Activated T-helper 2 cell treated with anti-CD3 and anti-CD28 coated beads, Interferon-gamma antibody, Interleukin-2, Interleukin-4, amounts not matched to agents 10 μg/mL and 5 μg/mL and 100 μg/mL, durations not matched to agents 14 hours and 24 hours and 36 hours (primary cell): ENCODE measurements at regions of chr2 and their contacts with region 1.

Region 1: GRCh38 chr2:170928824-170929685 is at the start of gene GORASP2:
- DNase-seq: peak; percentile 98
- H3K4me3 Mint-ChIP-seq: peak within 1 kb of the TSS; percentile 92
- H3K27ac Mint-ChIP-seq: peak within 1 kb of the TSS; percentile 94
- H3K4me1 Mint-ChIP-seq: peaks cover 45% of the 10 kb centered on the region
- H3K27me3 Mint-ChIP-seq: no peaks in the 10 kb centered on the region
- total RNA-seq, gene GORASP2: 92.4 and 92.8 TPM in 2 replicates

Region 2: DNA sequence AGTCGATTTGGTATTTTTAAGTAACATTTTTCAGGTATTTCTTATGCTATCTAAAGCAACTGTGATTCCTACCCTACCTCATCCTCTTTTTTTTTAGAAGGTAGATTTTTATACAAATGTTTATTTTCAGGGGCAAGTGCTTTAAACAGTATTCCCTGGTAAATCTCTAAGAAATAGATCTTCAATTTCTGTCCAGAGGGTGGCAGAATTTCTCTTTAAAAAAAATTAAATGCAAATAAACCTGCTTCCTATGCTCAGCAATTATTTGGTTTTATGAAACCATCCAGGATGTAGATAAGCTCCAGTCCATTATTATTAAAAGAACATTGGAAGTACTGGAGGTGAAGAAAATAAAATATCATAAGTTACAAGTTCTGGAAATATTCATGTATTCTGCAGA is 559.2 kb before region 1 on chr2:
- intact Hi-C with region 1: loop called (anchors 2 kb)
- DNase-seq: no peak
- H3K4me3 Mint-ChIP-seq: peak overlapping the region; percentile 71
- H3K27ac Mint-ChIP-seq: peak overlapping the region; percentile 86
- H3K4me1 Mint-ChIP-seq: peaks cover 86% of the 10 kb centered on the region
- H3K27me3 Mint-ChIP-seq: no peaks in the 10 kb centered on the region

Region 3: DNA sequence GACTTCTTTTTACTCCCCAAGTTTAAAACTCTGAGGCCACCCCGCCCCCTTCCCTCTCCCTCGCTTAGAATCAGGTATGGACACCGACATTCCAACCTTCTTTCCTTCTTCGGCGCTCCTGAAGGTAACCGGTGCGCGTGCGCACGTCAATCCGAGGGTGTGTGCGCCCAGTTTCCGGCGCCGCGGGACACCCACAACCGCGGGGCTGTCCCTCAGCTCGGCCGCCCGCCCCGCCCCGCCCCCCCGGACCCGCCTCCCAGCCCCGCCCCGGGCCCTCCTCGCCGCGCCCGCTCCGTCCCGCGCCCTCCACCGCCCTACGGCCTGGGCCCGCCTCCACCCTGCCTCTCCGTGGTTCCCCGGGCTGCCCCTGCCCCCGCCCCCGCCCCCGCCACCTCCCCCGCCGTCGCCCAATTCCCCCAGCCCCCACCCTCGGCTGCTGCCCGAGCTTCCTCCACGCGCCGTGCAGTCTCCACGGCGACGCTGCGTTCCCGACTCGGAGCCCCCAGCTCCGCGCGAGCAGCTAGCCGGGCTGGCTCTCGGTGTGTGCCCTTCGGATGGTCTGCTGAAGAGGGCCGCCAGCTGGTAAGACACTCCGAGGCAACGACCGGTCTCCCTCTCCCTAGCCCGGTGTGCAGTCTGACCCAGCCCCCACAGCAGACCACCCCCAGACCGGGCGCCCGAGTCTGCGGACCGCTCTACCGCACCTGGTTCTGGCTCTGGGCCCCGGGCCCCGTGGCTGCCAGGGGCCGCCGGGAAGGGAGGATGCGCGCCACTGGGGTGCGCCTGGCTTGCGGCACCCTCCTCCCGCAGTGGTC is 158.2 kb before region 1 on chr2:
- intact Hi-C with region 1: no loop called
- DNase-seq: peak; percentile 68
- H3K4me3 Mint-ChIP-seq: peak overlapping the region; percentile 94
- H3K27ac Mint-ChIP-seq: peak overlapping the region; percentile 85
- H3K4me1 Mint-ChIP-seq: peaks cover 10% of the 10 kb centered on the region
- H3K27me3 Mint-ChIP-seq: peaks cover 36% of the 10 kb centered on the region

Region 4: GRCh38 chr2:170836027-170836426 is 93.0 kb before region 1 on chr2:
- intact Hi-C with region 1: no loop called
- DNase-seq: no peak
- H3K4me3 Mint-ChIP-seq: no peak overlapping the region
- H3K27ac Mint-ChIP-seq: no peak overlapping the region
- H3K4me1 Mint-ChIP-seq: peaks cover 4% of the 10 kb centered on the region
- H3K27me3 Mint-ChIP-seq: no peaks in the 10 kb centered on the region

Region 5: DNA sequence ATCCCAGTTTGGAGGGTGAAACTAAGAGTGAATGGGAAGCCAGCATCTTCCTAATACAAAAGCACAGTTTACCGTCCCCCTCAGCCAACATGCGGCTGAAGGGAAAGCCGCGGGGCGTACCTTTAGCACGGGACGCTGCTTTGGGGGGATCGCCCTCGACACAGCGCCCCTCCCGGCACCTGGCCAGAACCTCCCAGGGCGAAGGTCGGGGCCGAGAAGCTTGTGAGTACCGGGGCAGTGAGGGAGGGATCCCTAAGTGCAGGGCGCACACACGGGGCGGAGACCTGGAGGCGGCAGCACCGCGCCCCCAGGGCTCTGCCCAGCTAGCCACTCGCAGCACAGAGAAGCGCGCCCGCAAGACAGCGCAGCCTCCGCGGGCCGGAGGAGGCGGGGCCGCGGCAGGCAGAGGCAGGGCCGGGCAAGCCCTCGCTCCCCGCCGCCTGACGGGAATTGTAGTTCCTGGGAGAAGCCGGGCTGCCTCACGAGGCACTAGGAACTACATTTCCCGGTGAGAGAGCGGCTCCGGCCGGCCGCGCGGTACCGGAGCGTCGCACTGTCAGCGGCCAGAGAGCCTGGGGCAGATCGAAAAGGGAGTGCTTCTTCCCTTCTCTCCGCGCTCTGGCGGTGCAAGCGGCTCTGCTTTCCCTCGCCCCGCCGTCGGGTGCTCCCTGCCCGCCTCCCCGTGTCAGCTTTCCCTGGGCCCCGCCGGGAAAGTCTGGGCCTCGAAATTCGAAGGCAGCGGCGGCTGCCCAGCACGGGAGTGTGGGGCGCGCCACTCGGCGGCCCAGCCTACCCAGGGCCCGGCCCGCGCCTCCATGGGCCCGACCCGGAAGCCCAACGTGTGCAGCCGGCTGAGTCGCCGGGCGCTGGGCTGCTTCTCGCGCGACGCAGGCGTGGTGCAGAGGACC is 505.0 kb after region 1 on chr2 and contains the starts of genes DCAF17 and METTL8:
- intact Hi-C with region 1: loop called (anchors 1 kb)
- DNase-seq: peak; percentile 93
- H3K4me3 Mint-ChIP-seq: peak within 1 kb of the TSS; percentile 89
- H3K27ac Mint-ChIP-seq: peak within 1 kb of the TSS; percentile 91
- H3K4me1 Mint-ChIP-seq: peaks cover 32% of the 10 kb centered on the region
- H3K27me3 Mint-ChIP-seq: no peaks in the 10 kb centered on the region
- total RNA-seq, gene DCAF17: 22.6 and 23.7 TPM in 2 replicates
- total RNA-seq, gene METTL8: 38.2 and 39.9 TPM in 2 replicates

Region 6: DNA sequence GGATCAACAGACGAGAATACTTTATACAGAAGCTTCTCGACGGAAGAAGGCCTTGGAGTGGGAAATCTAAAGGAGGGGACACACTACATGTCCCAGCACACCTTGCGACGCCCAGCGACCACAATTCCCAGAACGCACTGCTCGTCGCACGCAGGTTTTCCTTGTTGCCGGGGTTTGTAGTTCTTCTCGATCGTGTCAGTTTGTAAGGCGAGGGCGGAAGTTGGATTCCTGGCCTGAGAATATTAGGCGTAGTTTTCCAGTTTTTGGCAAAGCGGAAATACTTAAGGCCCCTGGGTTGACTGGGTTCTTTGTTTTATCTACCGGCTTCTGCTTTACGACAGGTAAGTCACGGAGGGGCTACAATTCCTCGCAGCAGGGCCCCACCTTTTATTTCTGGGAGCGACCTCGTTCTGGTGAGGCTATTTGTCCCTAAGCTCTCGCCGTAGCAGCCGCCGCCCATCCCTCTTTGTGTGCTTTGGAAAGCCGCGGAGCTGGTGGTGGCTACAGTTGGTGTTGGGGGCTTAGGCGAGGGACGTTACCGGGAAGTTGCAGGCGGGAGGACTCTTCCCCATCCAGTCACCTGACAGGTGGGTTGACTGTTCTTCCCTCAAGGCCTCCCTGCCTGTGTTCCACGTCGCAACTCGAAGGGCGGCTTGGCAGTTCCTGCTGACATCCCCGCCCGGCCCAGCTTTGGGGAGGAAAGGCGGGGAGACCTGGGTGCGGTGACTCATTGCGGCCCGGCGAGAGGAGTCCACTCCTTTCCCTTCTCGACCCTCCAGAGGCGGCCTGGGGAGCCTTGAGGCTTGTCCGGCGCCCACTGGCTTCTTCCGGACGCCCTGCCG is 758.5 kb after region 1 on chr2 and contains the start of gene DYNC1I2:
- intact Hi-C with region 1: loop called (anchors 1 kb)
- DNase-seq: peak; percentile 72
- H3K4me3 Mint-ChIP-seq: peak within 1 kb of the TSS; percentile 81
- H3K27ac Mint-ChIP-seq: peak within 1 kb of the TSS; percentile 72
- H3K4me1 Mint-ChIP-seq: peaks cover 18% of the 10 kb centered on the region
- H3K27me3 Mint-ChIP-seq: peaks cover 19% of the 10 kb centered on the region
- total RNA-seq, gene DYNC1I2: 65.9 and 69.5 TPM in 2 replicates